Activated B cell treated with CpG ODN at 0.5 μM for 24 hours (primary cell): ENCODE measurements at regions of chr2 and their contacts with region 1.

Region 1: GRCh38 chr2:74587664-74588277 is 33.3 kb downstream of the DOK1 start:
- DNase-seq: peak; percentile 43
- ATAC-seq: peak; percentile 96
- H3K4me3 Mint-ChIP-seq: no peak overlapping the region
- H3K27ac Mint-ChIP-seq: no peak overlapping the region
- H3K4me1 Mint-ChIP-seq: peaks cover 8% of the 10 kb centered on the region
- H3K27me3 Mint-ChIP-seq: peaks cover 4% of the 10 kb centered on the region
- CTCF ChIP-seq: no peak

Region 2: DNA sequence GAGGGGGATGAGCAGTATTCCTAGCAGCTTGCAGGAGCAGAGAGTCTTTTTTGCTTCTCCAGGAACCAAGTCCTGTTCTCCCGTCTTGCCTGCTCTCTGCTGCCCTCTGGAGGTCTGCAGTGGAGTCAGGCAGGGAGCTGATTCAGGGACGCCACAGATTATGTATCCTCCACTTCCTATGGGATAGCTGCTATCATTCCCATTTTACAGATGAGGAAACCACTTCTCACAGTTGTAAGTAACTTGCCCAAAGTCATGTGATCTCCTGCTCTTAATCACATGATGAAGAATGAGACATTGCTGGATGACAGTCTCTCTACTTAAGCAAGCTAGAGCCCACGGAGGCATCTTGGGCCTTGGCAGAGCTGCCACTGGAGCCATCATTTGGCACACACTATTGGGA is 252.8 kb before region 1 on chr2:
- CTCF ChIA-PET with region 1: interaction called, 9 read pairs
- POLR2A ChIA-PET with region 1: no interaction called
- intact Hi-C with region 1: loop called (anchors 5 kb)
- DNase-seq: peak; percentile 62
- ATAC-seq: peak; percentile 66
- H3K4me3 Mint-ChIP-seq: no peak overlapping the region
- H3K27ac Mint-ChIP-seq: no peak overlapping the region
- H3K4me1 Mint-ChIP-seq: no peaks in the 10 kb centered on the region
- H3K27me3 Mint-ChIP-seq: no peaks in the 10 kb centered on the region
- CTCF ChIP-seq: peak; percentile 96

Region 3: GRCh38 chr2:74421221-74421870 is 166.4 kb before region 1 on chr2 and contains the starts of genes C2orf81 and WDR54:
- CTCF ChIA-PET with region 1: no interaction called
- POLR2A ChIA-PET with region 1: no interaction called
- intact Hi-C with region 1: loop called (anchors 1 kb)
- DNase-seq: peak; percentile 97
- ATAC-seq: peak; percentile 88
- H3K4me3 Mint-ChIP-seq: peak within 1 kb of the TSS; percentile 99
- H3K27ac Mint-ChIP-seq: peak within 1 kb of the TSS; percentile 96
- H3K4me1 Mint-ChIP-seq: peaks cover 44% of the 10 kb centered on the region
- H3K27me3 Mint-ChIP-seq: no peaks in the 10 kb centered on the region
- CTCF ChIP-seq: no peak
- total RNA-seq, gene C2orf81: 3.9 and 5.5 TPM in 2 replicates
- total RNA-seq, gene WDR54: 32.3 and 33.5 TPM in 2 replicates

Region 4: GRCh38 chr2:74553892-74554645 is 33.7 kb before region 1 on chr2 and contains the start of gene LOXL3:
- CTCF ChIA-PET with region 1: interaction called, 6 read pairs
- POLR2A ChIA-PET with region 1: interaction called, 7 read pairs
- intact Hi-C with region 1: loop called (anchors 2 kb)
- DNase-seq: peak; percentile 83
- ATAC-seq: peak; percentile 51
- H3K4me3 Mint-ChIP-seq: peak within 1 kb of the TSS; percentile 97
- H3K27ac Mint-ChIP-seq: peak within 1 kb of the TSS; percentile 90
- H3K4me1 Mint-ChIP-seq: peaks cover 32% of the 10 kb centered on the region
- H3K27me3 Mint-ChIP-seq: peaks cover 7% of the 10 kb centered on the region
- CTCF ChIP-seq: no peak
- total RNA-seq, gene LOXL3: 1.4 and 2.3 TPM in 2 replicates

Region 5: GRCh38 chr2:74573747-74574562 is 13.8 kb before region 1 on chr2:
- CTCF ChIA-PET with region 1: interaction called, 21 read pairs
- POLR2A ChIA-PET with region 1: interaction called, 3 read pairs
- intact Hi-C with region 1: loop called (anchors 1 kb)
- DNase-seq: no peak
- ATAC-seq: peak; percentile 67
- H3K4me3 Mint-ChIP-seq: peak overlapping the region; percentile 53
- H3K27ac Mint-ChIP-seq: peak overlapping the region; percentile 89
- H3K4me1 Mint-ChIP-seq: peaks cover 39% of the 10 kb centered on the region
- H3K27me3 Mint-ChIP-seq: no peaks in the 10 kb centered on the region
- CTCF ChIP-seq: no peak